Breast epithelium (tissue), 4 donors: ENCODE measurements at regions of chr2 and their contacts with region 1.

Region 1: DNA sequence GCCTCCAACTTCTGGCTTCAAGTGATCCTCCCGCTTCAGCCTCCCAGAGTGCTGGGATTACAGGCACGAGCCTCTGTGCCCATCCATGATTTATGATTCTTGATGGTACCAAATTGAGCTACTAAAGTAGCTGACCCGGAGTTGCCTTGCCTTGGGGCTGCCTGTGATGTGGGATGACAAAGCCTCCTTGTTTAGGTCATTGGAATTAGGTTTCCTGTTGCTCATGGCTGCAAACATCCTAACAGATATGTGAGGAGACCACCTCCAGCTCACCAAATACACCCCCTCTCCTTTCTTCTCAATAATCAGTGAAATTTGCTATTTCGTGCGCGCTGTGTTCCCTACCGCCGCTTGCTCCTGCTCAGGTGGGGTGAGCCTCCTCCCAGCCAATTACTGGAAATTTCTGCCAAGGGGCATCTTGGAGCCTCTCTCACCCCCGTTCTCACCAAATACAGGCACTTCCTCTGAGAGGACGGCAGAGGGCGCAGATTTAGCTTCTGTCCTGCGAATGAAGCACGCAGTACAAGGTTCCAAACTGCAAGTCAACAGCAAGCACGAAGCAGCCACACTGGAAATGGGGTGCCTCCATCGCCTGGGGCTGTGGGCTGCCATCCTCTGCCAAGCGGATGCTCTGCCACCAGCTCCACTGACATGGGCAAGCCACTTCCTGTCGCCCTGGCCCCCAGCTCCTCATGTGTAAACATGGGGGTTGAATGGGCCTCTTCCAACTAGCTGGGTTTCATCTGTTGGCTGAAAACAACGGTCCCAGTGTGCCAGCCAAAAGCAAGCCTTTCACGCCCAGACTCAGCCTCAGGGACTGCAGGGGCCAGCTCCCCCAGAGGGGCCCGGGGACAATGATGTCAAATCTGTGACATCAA is 71.7 kb downstream of the NCAPH start:
- DNase-seq: peak; percentile 72 to 79
- H3K4me3 ChIP-seq: peak overlapping the region in 1 of 3 donors; percentile 3
- H3K27ac ChIP-seq: peak overlapping the region; percentile 80 to 81
- H3K4me1 ChIP-seq: peaks cover 0 to 14% of the 10 kb centered on the region in 2 donors
- H3K27me3 ChIP-seq: no peaks in the 10 kb centered on the region
- CTCF ChIP-seq: peak; percentile 60 to 89 (median 86)
- POLR2A ChIP-seq: no peak

Region 2: DNA sequence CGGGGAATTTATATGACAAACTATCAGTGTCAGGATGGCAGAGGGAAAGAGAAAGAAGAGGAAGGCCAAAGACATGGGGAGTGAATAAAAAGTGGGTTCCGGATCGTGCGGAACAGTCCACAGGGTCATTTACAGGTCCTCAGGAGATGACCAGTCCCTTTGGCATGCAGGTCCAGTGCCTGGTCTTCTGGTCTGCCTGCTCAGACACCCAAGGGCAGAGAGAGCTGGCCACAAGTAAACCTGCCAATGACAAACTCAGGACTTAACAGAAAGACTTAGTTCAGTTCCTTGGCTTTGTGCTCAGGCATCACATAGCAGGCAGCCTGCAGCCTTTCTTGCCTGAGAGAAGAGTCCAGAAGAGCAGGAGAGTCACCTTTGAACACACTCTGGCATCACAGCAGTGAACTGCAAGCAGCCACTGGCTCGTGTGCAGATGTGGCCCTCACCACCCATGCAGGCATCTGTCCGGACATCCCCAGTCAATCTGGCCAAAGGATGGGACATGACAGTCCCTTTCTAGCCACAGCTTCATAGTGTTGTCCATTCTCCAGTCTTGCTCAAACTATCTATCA is 155.5 kb before region 1 on chr2:
- intact Hi-C with region 1: no loop called
- DNase-seq: peak; percentile 74 to 87
- H3K4me3 ChIP-seq: no peak overlapping the region
- H3K27ac ChIP-seq: peak overlapping the region; percentile 52 to 53
- H3K4me1 ChIP-seq: no peaks in the 10 kb centered on the region
- H3K27me3 ChIP-seq: no peaks in the 10 kb centered on the region
- CTCF ChIP-seq: no peak
- POLR2A ChIP-seq: no peak

Region 3: DNA sequence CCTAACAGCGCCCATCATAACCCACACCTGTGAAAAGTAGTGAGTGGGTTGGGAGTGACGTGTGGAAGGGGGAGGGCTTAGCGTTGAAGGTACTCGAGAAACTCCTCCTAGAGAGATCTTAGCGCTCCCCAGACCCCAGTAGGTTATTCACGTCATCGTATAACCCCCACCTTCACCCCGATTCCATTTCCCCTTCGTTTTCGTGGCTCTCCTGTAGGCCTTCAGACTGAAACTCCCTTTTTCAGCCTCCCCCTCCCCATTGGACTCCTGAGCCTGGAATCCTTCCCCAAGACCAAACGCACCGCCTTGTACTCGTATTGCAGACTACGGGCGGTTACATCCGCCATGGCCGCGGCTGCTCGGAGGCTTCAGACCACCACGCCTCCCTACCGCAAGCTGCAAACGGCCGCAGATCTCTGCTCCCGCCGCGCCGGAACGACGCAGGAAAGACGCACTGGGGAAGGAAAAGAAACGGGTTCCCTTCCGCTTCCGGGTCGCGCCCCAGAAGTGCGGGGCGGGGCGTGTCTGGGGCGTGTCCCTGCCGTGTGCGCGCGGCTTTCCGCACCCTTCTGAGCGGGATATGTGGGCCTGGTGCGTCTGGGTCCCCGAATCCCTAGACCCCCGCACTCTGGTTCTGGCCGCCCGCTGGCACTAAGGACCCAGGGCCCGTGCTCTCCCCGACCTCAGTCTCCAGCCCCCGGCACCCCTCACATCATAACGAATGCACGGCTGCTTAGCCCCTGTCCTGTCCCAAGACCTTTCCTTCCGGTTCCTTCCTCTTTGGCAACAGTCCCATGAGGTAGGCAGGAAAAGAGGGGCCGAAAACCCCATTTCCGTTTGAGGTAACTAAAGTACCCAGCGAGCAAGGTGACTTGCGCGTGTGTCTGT is 101.9 kb before region 1 on chr2 and contains the start of gene SNRNP200:
- intact Hi-C with region 1: loop called (anchors 10 kb)
- DNase-seq: peak; percentile 79 to 83
- H3K4me3 ChIP-seq: peak within 1 kb of the TSS; percentile 81 to 91 (median 90)
- H3K27ac ChIP-seq: peak within 1 kb of the TSS; percentile 87 to 91
- H3K4me1 ChIP-seq: peaks cover 0 to 6% of the 10 kb centered on the region in 2 donors
- H3K27me3 ChIP-seq: no peaks in the 10 kb centered on the region
- CTCF ChIP-seq: no peak
- POLR2A ChIP-seq: peak; percentile 81
- total RNA-seq, gene SNRNP200: 99.4 to 111 (median 109) TPM

Region 4: DNA sequence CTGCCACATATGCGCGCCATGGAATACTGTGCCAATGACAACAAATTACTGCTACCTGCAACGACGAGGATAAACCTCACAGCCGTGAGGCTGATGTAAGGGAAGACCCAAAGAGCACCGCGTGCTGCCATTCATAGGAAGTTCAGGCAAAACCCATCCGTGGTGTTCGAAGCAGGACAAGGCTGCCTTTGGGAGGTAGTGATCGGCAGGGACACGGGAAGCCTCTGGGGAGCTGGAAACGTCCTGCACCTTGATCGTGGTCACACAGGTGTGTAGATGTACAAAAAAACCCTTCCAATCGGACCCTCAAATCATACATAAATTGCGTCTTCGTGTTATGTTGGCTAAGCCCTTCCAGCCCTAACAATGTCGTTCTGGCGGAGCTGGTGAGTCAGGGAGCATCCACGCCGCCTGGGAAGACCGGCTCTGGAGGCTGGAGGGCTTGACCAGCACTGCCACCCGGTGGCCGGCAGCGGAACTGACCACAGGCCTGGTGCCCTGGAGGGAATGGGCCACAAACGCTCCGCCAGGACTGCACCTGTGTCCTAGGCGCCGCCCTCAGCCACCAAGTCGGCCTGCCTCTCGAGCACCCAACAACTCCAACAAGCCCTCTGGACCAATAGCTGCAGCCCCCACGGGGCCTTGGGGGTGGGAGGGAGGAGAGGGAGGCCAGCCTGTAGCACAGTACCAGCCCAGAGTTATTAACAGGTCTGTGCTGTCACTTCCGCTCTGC is 102.0 kb after region 1 on chr2:
- intact Hi-C with region 1: loop called (anchors 5 kb)
- DNase-seq: peak; percentile 82 to 93
- H3K4me3 ChIP-seq: peak overlapping the region in 1 of 3 donors; percentile 0
- H3K27ac ChIP-seq: peak overlapping the region; percentile 5 to 61
- H3K4me1 ChIP-seq: no peaks in the 10 kb centered on the region
- H3K27me3 ChIP-seq: no peaks in the 10 kb centered on the region
- CTCF ChIP-seq: peak; percentile 94 to 98 (median 98)
- POLR2A ChIP-seq: no peak

Region 5: GRCh38 chr2:96554293-96555145 is 147.2 kb after region 1 on chr2:
- intact Hi-C with region 1: loop called (anchors 5 kb)
- DNase-seq: peak; percentile 68 to 78
- H3K4me3 ChIP-seq: peak overlapping the region in 2 of 3 donors; percentile 33 to 36
- H3K27ac ChIP-seq: peak overlapping the region; percentile 75 to 77
- H3K4me1 ChIP-seq: peaks cover 0 to 2% of the 10 kb centered on the region in 2 donors
- H3K27me3 ChIP-seq: no peaks in the 10 kb centered on the region
- CTCF ChIP-seq: peak; percentile 92 to 98 (median 97)
- POLR2A ChIP-seq: no peak